ENCODE measurements at regions of chr7 and their contacts with region 1.

Region 1: DNA sequence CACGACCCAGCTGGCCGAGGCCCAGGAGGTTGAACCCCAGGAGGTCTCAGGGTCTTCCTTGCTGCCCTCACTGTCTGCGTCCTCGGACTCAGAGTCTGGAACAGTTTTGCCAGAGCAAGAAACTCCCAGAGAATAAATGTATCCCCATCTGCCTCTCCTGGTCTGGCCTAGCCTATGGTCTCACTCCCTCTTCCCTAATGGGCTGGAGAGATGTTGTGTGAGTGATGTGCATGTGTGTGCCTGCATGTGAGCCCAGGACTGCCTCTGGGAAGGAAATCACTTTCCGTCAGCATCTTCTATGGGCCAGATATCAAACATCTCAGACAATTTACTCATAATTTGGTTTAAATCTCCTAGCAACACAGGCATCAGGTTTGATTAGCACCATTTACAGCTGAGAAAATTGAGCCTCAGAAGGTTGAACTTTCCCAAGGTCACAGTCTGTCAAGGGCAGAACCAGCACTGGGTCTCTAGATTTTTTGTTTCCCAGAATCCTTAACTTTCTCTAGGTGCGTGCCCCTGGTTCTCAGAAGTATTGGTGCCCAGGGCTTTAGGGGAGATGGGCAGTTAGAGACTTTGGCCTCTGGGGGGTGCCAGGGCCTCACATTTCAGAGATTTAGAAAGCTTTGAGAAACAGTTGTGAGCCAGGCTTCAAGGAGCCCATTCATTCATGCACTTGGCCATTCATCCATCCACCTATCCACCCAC is 4.9 kb downstream of the TMEM270 start:
- DNase-seq: peak; percentile 63
- ATAC-seq: peak; percentile 80
- H3K4me3 ChIP-seq: no peak overlapping the region
- H3K27ac ChIP-seq: no peak overlapping the region
- H3K4me1 ChIP-seq: peaks cover 18% of the 10 kb centered on the region
- H3K27me3 ChIP-seq: no peaks in the 10 kb centered on the region
- CTCF ChIP-seq: peak; percentile 87
- POLR2A ChIP-seq: no peak
- RAD21 ChIP-seq: peak; percentile 93

Region 2: DNA sequence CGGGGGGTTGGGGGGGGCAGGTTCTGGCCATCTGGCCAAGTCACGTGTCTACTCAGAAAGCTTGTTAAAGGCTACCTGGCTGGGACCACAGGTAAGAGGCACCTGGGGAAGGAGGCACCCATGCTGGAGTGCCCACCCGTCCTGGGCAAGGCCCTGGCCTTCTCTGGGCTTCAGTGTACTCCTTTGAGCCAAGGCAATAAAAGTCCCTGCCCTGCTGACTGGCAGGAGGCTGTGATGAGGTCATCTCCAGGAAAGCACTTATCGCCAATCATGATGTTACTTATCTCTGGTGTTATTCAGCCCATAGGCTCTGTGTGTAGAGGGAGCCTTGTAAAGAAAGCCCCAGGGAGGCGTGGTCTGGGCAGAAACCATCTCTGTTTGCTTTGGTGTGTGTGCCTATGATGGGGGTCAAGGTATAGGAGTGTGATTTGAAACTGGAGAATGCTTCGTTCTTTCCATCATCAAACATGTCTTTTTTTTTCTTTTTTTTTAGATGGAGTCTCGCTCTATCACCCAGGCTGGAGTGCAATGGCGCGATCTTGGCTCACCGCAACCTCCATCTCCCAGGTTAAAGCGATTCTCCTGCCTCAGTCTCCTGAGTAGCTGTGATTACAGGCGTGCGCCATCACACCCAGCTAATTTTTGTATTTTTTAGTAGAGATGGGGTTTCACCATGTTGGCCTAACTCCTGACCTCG is 37.6 kb before region 1 on chr7:
- CTCF ChIA-PET with region 1: no interaction called
- POLR2A ChIA-PET with region 1: no interaction called
- dilution Hi-C with region 1: no loop called
- in situ Hi-C with region 1: no loop called
- intact Hi-C with region 1: no loop called
- DNase-seq: peak; percentile 64
- ATAC-seq: peak; percentile 51
- H3K4me3 ChIP-seq: no peak overlapping the region
- H3K27ac ChIP-seq: no peak overlapping the region
- H3K4me1 ChIP-seq: peaks cover 13% of the 10 kb centered on the region
- H3K27me3 ChIP-seq: no peaks in the 10 kb centered on the region
- CTCF ChIP-seq: no peak
- POLR2A ChIP-seq: no peak
- RAD21 ChIP-seq: no peak

Region 3: GRCh38 chr7:73842247-73842895 is 23.5 kb before region 1 on chr7 and contains the start of gene METTL27:
- CTCF ChIA-PET with region 1: no interaction called
- POLR2A ChIA-PET with region 1: no interaction called
- dilution Hi-C with region 1: no loop called
- in situ Hi-C with region 1: no loop called
- intact Hi-C with region 1: no loop called
- DNase-seq: peak; percentile 91
- ATAC-seq: peak; percentile 99
- H3K4me3 ChIP-seq: peak within 1 kb of the TSS; percentile 92
- H3K27ac ChIP-seq: peak within 1 kb of the TSS; percentile 93
- H3K4me1 ChIP-seq: no peaks in the 10 kb centered on the region; the same call in 1 of the 2 replicates
- H3K27me3 ChIP-seq: no peaks in the 10 kb centered on the region
- CTCF ChIP-seq: no peak
- POLR2A ChIP-seq: peak; percentile 85
- RAD21 ChIP-seq: no peak
- total RNA-seq, gene METTL27: 1.7 and 2.3 TPM in 2 replicates

Region 4: DNA sequence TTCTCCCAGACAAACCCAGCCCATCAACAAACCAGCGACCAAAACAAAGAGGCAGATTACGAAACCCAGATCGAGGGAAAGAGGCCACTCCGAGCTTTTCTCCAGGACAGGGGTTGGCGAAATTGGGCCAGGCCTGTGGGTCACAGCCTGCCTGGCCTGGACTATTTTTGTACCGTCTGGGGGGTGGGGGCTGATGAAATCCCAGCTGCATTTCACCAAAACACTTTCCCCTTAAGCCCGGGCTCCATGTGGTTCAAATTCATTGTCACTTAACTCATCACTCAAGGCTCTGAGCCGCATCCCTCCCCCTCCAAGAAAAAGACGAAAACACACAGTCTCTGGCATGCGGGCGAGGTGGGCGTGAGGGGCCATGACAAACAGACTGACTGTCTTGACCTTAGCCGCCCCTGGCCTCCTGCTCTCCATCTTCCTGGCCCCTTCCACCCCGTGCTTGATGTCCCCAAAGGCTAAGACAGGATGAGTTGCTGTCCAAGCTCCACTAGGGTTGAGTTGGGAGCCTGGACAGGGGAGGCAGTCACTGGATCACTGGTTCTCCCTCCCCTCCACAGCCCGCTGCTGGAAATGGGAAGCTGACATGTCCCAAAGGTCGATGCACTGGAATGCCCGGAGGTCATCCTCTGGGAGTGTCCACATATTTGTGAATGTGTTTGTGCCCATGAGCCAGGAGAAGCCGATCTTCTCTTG is 14.2 kb after region 1 on chr7:
- CTCF ChIA-PET with region 1: no interaction called
- POLR2A ChIA-PET with region 1: interaction called, 16 read pairs
- dilution Hi-C with region 1: no loop called
- in situ Hi-C with region 1: no loop called
- intact Hi-C with region 1: no loop called
- DNase-seq: peak; percentile 53
- ATAC-seq: peak; percentile 79
- H3K4me3 ChIP-seq: no peak overlapping the region
- H3K27ac ChIP-seq: peak overlapping the region; percentile 35; the same call in 1 of the 2 replicates
- H3K4me1 ChIP-seq: peaks cover 22% of the 10 kb centered on the region
- H3K27me3 ChIP-seq: no peaks in the 10 kb centered on the region; the same call in 1 of the 2 replicates
- CTCF ChIP-seq: no peak
- POLR2A ChIP-seq: no peak
- RAD21 ChIP-seq: no peak

Region 5: GRCh38 chr7:73954181-73954580 is 88.3 kb after region 1 on chr7:
- CTCF ChIA-PET with region 1: no interaction called
- POLR2A ChIA-PET with region 1: interaction called, 12 read pairs
- dilution Hi-C with region 1: no loop called
- in situ Hi-C with region 1: no loop called
- intact Hi-C with region 1: no loop called
- DNase-seq: no peak
- ATAC-seq: no peak
- H3K4me3 ChIP-seq: no peak overlapping the region
- H3K27ac ChIP-seq: no peak overlapping the region
- H3K4me1 ChIP-seq: no peaks in the 10 kb centered on the region
- H3K27me3 ChIP-seq: peaks cover 1% of the 10 kb centered on the region; the same call in 1 of the 2 replicates
- CTCF ChIP-seq: no peak
- POLR2A ChIP-seq: no peak
- RAD21 ChIP-seq: no peak

Region 6: DNA sequence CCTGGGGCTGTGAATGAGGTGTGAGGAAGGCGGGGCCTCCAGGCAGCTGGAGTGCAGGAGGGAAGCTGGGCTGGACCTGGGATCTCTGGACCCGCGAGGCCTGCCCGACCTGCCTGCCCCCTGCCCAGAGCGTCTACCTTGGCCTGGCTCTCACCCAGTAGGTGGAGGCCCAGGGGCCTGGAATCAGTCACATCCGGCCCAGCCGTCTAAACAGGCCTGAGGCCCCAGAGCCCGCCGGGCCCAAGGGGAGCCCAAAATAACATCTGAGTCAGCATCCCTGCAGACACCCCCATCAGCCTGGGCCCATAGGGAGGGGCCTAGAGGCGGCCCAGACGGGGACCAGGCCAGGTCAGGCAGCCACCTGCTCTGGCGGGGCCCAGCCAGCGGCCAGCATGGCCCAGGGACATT is 147.0 kb after region 1 on chr7:
- CTCF ChIA-PET with region 1: no interaction called
- POLR2A ChIA-PET with region 1: no interaction called
- dilution Hi-C with region 1: no loop called
- in situ Hi-C with region 1: no loop called
- intact Hi-C with region 1: no loop called
- DNase-seq: peak; percentile 29
- ATAC-seq: 0 out of 2 replicates have a peak, but pooled peaks have one; percentile 32
- H3K4me3 ChIP-seq: no peak overlapping the region
- H3K27ac ChIP-seq: no peak overlapping the region
- H3K4me1 ChIP-seq: peaks cover 7% of the 10 kb centered on the region; the same call in 1 of the 2 replicates
- H3K27me3 ChIP-seq: no peaks in the 10 kb centered on the region
- CTCF ChIP-seq: no peak
- POLR2A ChIP-seq: no peak
- RAD21 ChIP-seq: no peak

Region 7: GRCh38 chr7:74026903-74027551 is 161.1 kb after region 1 on chr7:
- CTCF ChIA-PET with region 1: interaction called, 7 read pairs
- POLR2A ChIA-PET with region 1: no interaction called
- dilution Hi-C with region 1: no loop called
- in situ Hi-C with region 1: loop called (anchors 5 kb)
- intact Hi-C with region 1: loop called (anchors 1 kb)
- DNase-seq: peak; percentile 46
- ATAC-seq: peak; percentile 89
- H3K4me3 ChIP-seq: no peak overlapping the region
- H3K27ac ChIP-seq: no peak overlapping the region
- H3K4me1 ChIP-seq: peaks cover 33% of the 10 kb centered on the region
- H3K27me3 ChIP-seq: no peaks in the 10 kb centered on the region
- CTCF ChIP-seq: peak; percentile 89
- POLR2A ChIP-seq: no peak
- RAD21 ChIP-seq: peak; percentile 78

Region 8: DNA sequence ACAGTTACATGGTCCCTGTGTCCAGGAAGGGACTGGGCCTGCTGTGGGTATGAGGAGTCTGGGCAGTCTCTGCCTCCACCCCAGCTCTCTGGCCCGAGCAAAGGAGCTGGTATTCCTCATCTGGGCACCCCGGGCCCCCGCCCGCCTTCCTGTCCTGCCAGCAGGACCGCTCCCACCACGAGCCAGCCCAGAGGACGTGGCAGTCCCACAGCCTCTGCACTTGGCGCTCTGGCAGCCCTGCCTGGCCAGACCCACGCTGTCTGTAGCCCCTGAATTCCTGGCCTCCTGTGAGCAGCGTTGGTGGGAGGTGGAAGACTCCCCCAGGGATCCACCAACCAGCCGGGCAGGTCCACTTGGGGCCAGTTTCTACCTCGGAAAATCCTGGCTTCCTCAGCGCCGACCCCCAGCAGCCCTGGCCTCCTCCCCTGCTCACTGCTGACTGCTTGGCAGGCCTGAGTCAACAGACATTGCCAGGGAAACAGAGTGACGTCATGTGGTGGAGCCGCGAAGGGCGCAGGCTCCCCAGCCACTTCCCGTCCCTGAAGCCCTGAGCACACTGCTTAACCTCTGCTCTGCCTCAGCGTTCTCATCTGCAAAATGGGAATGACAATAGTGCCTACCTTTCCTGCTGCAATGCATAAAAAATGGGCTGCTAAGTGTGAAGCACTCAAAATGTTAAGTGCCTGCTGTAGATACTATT is 196.1 kb after region 1 on chr7:
- CTCF ChIA-PET with region 1: interaction called, 3 read pairs
- POLR2A ChIA-PET with region 1: no interaction called
- dilution Hi-C with region 1: no loop called
- in situ Hi-C with region 1: no loop called
- intact Hi-C with region 1: loop called (anchors 10 kb)
- DNase-seq: peak; percentile 91
- ATAC-seq: peak; percentile 97
- H3K4me3 ChIP-seq: no peak overlapping the region
- H3K27ac ChIP-seq: peak overlapping the region; percentile 49; the same call in 1 of the 2 replicates
- H3K4me1 ChIP-seq: peaks cover 4% of the 10 kb centered on the region
- H3K27me3 ChIP-seq: no peaks in the 10 kb centered on the region; the same call in 1 of the 2 replicates
- CTCF ChIP-seq: no peak
- POLR2A ChIP-seq: no peak
- RAD21 ChIP-seq: no peak

Region 9: GRCh38 chr7:74173866-74174605 is 308.1 kb after region 1 on chr7 and contains the start of gene EIF4H:
- CTCF ChIA-PET with region 1: interaction called, 5 read pairs
- POLR2A ChIA-PET with region 1: no interaction called
- dilution Hi-C with region 1: no loop called
- in situ Hi-C with region 1: no loop called
- intact Hi-C with region 1: loop called (anchors 2 kb)
- DNase-seq: peak; percentile 95
- ATAC-seq: peak; percentile 89
- H3K4me3 ChIP-seq: peak within 1 kb of the TSS; percentile 92
- H3K27ac ChIP-seq: peak within 1 kb of the TSS; percentile 89
- H3K4me1 ChIP-seq: peaks cover 9% of the 10 kb centered on the region
- H3K27me3 ChIP-seq: no peaks in the 10 kb centered on the region
- CTCF ChIP-seq: no peak
- POLR2A ChIP-seq: peak; percentile 95
- RAD21 ChIP-seq: peak; percentile 3; the same call in 1 of the 2 replicates
- total RNA-seq, gene EIF4H: 241 and 269 TPM in 2 replicates

Region 10: GRCh38 chr7:74401137-74401859 is 535.4 kb after region 1 on chr7:
- CTCF ChIA-PET with region 1: no interaction called
- POLR2A ChIA-PET with region 1: no interaction called
- dilution Hi-C with region 1: no loop called
- in situ Hi-C with region 1: loop called (anchors 10 kb)
- intact Hi-C with region 1: loop called (anchors 1 kb)
- DNase-seq: peak; percentile 41
- ATAC-seq: peak; percentile 91
- H3K4me3 ChIP-seq: no peak overlapping the region
- H3K27ac ChIP-seq: no peak overlapping the region
- H3K4me1 ChIP-seq: no peaks in the 10 kb centered on the region
- H3K27me3 ChIP-seq: no peaks in the 10 kb centered on the region
- CTCF ChIP-seq: peak; percentile 88
- POLR2A ChIP-seq: no peak
- RAD21 ChIP-seq: peak; percentile 88

Measured in IMR-90 (cell line).